ENCODE measurements at regions of chr1 and their contacts with region 1.

Region 1: GRCh38 chr1:213264531-213264930 is 213.5 kb downstream of the RPS6KC1 start:
- DNase-seq: no peak
- H3K4me3 ChIP-seq: no peak overlapping the region
- H3K27ac ChIP-seq: no peak overlapping the region
- H3K4me1 ChIP-seq: peaks cover 5% of the 10 kb centered on the region; the same call in 1 of the 2 replicates
- H3K27me3 ChIP-seq: no peaks in the 10 kb centered on the region
- CTCF ChIP-seq: no peak

Region 2: GRCh38 chr1:213331631-213332175 is 67.2 kb after region 1 on chr1:
- CTCF ChIA-PET with region 1: interaction called, 10 read pairs
- POLR2A ChIA-PET with region 1: no interaction called
- intact Hi-C with region 1: no loop called
- DNase-seq: no peak
- H3K4me3 ChIP-seq: no peak overlapping the region
- H3K27ac ChIP-seq: no peak overlapping the region
- H3K4me1 ChIP-seq: 0 out of 2 replicates have a peak, but pooled peaks cover 8% of the 10 kb centered on the region
- H3K27me3 ChIP-seq: no peaks in the 10 kb centered on the region
- CTCF ChIP-seq: no peak